GM18951 (cell line): ENCODE measurements at regions of chr1 and their contacts with region 1.

Region 1: GRCh38 chr1:103514920-103515503 is 10.5 kb upstream of the RNPC3 start:
- POLR2A ChIP-seq: no peak

Region 2: DNA sequence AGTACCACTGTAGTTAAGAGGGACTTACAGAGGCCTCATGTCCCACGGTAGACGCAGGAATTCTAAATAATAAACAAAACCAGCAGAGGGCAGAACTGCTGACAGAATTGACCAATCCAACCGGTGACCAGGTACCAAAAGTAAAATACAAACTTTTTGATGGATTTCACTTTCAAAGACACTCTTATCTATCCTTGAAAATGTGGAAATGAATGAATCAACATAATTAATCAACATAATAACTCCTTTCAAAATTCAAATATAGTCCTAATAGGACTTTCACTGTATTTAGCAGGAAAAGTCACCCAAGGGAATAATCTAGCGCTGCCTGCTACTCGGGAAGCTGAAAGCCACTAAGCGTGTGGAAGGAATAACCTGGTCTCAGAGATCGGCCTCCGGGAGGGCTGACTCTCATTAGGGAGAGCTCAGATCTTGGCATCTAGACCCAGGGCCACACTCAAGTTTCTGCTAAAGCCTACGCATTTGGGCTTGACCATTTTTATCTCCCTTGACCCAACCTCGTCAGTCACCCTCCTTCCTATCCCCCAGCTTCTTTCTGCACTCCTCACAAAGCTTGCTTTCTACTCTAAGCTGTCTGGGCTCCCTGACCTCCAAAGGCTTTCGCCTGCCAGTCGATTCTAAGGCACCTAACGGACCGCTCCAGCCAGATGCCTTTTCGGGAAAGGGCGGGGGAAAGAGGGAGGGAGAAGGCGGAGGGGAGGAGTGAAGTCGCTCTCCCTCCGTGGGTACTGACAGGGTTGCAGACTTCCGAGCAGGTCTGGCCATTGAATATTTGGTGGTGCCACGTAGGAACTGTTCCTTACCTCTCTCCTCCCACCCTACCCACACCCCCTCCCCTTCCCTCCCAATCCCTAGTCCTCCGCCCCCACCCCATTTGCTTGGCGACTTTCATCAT is 408.3 kb before region 1 on chr1:
- in situ Hi-C with region 1: loop called (anchors 25 kb)
- POLR2A ChIP-seq: no peak